Activated naive CD4-positive, alpha-beta T cell treated with anti-CD3 and anti-CD28 coated beads for 36 hours (primary cell): ENCODE measurements at regions of chr13 and their contacts with region 1.

Region 1: DNA sequence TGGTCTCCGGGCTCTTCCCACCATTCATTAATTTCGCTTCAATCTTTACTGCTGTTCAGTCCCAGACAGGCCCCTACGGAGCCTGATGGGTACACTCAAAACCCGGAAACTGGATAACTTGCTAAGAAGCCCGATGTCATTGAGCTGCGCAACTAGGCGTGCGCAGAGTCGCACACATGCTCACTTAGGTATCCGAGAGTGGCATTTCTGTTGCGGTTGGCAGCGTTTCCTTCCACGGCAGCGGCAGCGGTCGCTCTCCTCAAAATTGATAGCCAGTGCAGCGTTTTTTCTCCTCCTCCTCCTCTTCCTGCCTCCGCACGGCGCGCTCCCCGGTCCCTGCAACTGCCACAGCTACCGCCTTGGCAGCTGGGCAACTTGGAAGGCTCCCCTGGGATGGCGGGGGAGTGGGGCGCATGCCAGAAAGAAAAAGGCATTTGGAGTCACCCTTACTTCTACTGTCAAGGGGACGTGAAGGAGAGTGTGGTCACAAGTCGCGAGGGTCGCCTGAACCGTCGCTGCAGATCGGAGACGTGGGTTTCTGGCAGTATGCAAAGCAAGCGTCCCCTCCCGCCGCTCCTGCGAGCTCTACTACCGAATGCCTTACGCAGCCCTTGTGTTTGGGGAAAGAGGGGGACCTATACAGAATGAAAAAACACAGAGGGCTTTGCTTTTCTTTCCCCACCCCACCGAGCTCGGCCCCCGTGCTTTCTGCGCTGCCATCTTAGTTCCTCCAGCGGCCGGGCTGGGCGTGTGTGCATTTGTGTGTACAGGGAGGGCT is 2.4 kb upstream of the MYCBP2 start:
- DNase-seq: peak; percentile 96
- H3K4me3 Mint-ChIP-seq: peak overlapping the region; percentile 92
- H3K27ac Mint-ChIP-seq: peak overlapping the region; percentile 98
- H3K4me1 Mint-ChIP-seq: peaks cover 38% of the 10 kb centered on the region
- H3K27me3 Mint-ChIP-seq: no peaks in the 10 kb centered on the region

Region 2: DNA sequence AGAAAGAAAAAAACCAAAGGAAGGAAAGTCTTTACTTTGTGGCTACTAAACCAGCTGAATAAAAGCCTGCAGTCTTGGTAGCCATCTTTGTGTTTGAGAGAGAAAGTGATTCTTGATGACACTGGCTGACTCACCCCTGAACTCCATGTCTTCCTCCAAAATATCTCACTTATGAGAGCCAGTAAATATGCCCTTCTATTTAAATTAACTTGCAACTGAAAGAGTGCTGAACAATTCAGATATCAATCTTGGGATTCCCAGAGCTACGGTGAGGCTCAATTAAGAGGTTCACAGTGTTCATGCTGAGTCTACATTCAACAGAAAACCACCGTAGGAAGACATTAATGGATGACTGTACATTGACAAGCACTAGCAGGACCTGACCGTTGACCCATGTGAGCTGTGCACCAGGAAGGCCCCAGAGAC is 501.0 kb before region 1 on chr13:
- CTCF ChIA-PET with region 1: no interaction called
- intact Hi-C with region 1: loop called (anchors 5 kb)
- DNase-seq: peak; percentile 60
- H3K4me3 Mint-ChIP-seq: no peak overlapping the region
- H3K27ac Mint-ChIP-seq: peak overlapping the region; percentile 69
- H3K4me1 Mint-ChIP-seq: peaks cover 12% of the 10 kb centered on the region
- H3K27me3 Mint-ChIP-seq: no peaks in the 10 kb centered on the region

Region 3: GRCh38 chr13:77002590-77003190 is 326.6 kb before region 1 on chr13:
- CTCF ChIA-PET with region 1: no interaction called
- intact Hi-C with region 1: loop called (anchors 2 kb)
- DNase-seq: no peak
- H3K4me3 Mint-ChIP-seq: no peak overlapping the region
- H3K27ac Mint-ChIP-seq: peak overlapping the region; percentile 0
- H3K4me1 Mint-ChIP-seq: peaks cover 40% of the 10 kb centered on the region
- H3K27me3 Mint-ChIP-seq: no peaks in the 10 kb centered on the region

Region 4: DNA sequence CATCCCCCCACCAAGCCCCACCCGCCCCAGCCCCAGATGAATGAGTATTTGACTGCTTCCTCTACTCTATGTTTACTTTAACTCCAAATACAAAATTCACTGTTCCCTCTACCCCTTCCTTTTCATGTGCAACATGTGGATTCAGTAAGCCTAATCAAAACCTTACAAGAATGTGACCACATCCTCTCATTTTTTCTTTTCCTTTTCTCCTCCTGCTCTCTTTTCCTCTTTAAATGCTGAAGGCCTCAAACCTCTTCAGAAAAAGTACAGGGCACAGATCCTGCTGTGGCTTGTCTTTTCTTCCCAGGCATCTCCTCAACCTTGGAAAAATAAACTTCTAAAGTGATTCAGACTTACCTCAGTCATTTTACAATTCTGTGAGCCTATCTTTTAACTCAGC is 121.4 kb before region 1 on chr13:
- CTCF ChIA-PET with region 1: no interaction called
- intact Hi-C with region 1: no loop called
- DNase-seq: no peak
- H3K4me3 Mint-ChIP-seq: no peak overlapping the region
- H3K27ac Mint-ChIP-seq: peak overlapping the region; percentile 43
- H3K4me1 Mint-ChIP-seq: peaks cover 14% of the 10 kb centered on the region
- H3K27me3 Mint-ChIP-seq: no peaks in the 10 kb centered on the region

Region 5: DNA sequence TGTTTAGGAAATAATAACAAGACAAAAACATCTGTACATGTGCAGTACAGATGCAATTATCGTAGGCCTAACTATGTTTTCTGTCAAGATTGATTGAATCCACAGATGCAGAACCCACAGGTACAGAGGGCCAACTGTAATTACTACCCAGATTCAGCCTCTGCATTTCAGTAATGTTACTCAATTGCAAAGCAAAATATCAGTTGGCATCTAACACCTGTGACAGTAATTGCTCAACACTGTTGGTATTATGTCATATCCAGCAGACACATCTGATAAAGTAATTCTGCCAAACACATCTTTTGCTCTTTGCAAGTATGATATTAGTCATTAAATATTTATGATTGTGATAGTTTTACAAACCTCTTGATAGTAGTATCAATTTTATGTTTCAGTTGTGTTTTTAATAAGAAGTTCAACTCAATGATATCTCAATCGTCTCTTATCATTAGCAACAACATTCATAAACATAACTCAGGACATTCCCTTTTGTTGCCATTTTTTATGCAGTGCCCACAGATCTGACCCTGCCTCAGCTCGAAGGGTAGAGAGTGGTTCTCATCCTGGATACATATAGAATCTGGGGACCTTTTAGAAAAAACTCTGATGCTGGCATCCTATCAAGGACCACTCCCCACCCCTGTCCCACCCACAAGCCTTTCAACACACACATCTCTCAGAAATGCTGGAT is 107.2 kb before region 1 on chr13:
- CTCF ChIA-PET with region 1: interaction called, 3 read pairs
- intact Hi-C with region 1: loop called (anchors 2 kb)
- DNase-seq: no peak
- H3K4me3 Mint-ChIP-seq: no peak overlapping the region
- H3K27ac Mint-ChIP-seq: no peak overlapping the region
- H3K4me1 Mint-ChIP-seq: peaks cover 26% of the 10 kb centered on the region
- H3K27me3 Mint-ChIP-seq: no peaks in the 10 kb centered on the region

Region 6: DNA sequence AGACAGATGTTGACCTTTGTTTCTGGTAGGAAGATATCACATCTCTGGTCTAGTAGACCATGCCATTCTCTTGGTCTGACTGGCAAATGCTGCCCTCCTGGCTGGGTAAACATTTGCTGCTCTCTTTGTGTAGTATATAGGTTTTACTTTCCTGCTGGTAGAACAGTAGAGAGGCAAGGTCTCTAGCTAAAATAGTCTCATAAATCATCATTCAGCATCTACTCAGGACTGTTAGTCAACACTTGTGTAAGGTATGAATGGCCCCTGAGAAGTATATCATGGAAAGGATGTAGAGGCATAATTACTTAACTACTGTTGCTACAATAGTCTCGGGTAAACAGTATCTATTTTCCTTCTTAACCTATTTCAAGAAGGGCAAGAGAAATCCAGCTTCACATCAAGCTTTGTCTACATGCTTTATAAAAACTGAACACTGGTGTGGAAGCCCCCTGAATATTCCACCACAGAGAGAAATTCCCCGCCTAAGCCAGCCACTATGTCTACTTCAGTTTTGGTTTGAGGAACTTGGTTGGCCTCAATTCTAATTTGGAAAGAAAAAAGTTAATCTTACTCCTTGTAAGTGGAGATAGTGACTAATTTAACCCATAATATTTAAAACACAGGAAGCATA is 15.9 kb after region 1 on chr13:
- CTCF ChIA-PET with region 1: interaction called, 4 read pairs
- intact Hi-C with region 1: loop called (anchors 1 kb)
- DNase-seq: peak; percentile 43
- H3K4me3 Mint-ChIP-seq: no peak overlapping the region
- H3K27ac Mint-ChIP-seq: peak overlapping the region; percentile 79
- H3K4me1 Mint-ChIP-seq: peaks cover 20% of the 10 kb centered on the region
- H3K27me3 Mint-ChIP-seq: no peaks in the 10 kb centered on the region

Region 7: GRCh38 chr13:77555246-77555645 is 225.9 kb after region 1 on chr13:
- CTCF ChIA-PET with region 1: no interaction called
- intact Hi-C with region 1: loop called (anchors 5 kb)
- DNase-seq: no peak
- H3K4me3 Mint-ChIP-seq: no peak overlapping the region
- H3K27ac Mint-ChIP-seq: no peak overlapping the region
- H3K4me1 Mint-ChIP-seq: peaks cover 20% of the 10 kb centered on the region
- H3K27me3 Mint-ChIP-seq: peaks cover 3% of the 10 kb centered on the region